ENCODE measurements at regions of chr7 and their contacts with region 1.

Region 1: GRCh38 chr7:69598081-69598486 is at the start of gene AUTS2:
- DNase-seq: peak; percentile 94
- H3K4me3 ChIP-seq: peak within 1 kb of the TSS; percentile 68 to 90 (median 90)
- H3K27ac ChIP-seq: peak within 1 kb of the TSS; percentile 90 to 92 (median 91)
- H3K4me1 ChIP-seq: peaks cover 0 to 44% (median 26%) of the 10 kb centered on the region in 4 donors
- H3K27me3 ChIP-seq: no peaks in the 10 kb centered on the region
- CTCF ChIP-seq: no peak
- EP300 ChIP-seq: no peak
- POLR2A ChIP-seq: no peak
- total RNA-seq, gene AUTS2: 25.5 to 55.7 (median 38.4) TPM

Region 2: DNA sequence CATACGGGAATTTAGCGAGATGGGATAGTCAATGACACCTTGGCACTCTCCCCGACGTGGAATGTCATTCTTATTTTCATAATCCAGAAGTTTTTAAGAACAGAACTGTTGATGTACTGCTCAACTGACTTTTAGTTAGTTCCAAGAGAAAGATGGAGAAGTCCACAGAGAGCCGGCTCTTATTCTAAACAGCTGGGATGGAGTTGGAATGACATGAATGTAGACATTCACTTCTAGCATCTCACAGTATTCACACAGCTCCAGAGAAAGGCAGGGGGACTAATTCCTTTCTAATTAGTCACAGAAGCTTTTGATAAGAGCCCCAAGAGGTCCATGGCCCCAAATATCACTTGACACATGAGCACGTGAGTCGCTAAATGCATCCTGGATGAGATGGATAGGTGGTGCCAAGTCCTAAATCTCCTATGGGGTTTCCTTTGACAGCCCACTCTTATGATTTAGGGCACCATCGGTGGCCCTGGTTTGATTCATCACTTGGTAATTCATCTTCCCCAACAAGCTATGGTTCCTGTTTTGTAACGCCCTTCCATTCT is 420.1 kb before region 1 on chr7:
- intact Hi-C with region 1: loop called (anchors 2 kb)
- DNase-seq: peak; percentile 76
- H3K4me3 ChIP-seq: no peak overlapping the region
- H3K27ac ChIP-seq: peak overlapping the region; percentile 37 to 77 (median 72)
- H3K4me1 ChIP-seq: peaks cover 0 to 30% (median 19%) of the 10 kb centered on the region in 4 donors
- H3K27me3 ChIP-seq: no peaks in the 10 kb centered on the region
- CTCF ChIP-seq: no peak
- EP300 ChIP-seq: peak in 1 of 4 donors; percentile 31
- POLR2A ChIP-seq: no peak

Region 3: DNA sequence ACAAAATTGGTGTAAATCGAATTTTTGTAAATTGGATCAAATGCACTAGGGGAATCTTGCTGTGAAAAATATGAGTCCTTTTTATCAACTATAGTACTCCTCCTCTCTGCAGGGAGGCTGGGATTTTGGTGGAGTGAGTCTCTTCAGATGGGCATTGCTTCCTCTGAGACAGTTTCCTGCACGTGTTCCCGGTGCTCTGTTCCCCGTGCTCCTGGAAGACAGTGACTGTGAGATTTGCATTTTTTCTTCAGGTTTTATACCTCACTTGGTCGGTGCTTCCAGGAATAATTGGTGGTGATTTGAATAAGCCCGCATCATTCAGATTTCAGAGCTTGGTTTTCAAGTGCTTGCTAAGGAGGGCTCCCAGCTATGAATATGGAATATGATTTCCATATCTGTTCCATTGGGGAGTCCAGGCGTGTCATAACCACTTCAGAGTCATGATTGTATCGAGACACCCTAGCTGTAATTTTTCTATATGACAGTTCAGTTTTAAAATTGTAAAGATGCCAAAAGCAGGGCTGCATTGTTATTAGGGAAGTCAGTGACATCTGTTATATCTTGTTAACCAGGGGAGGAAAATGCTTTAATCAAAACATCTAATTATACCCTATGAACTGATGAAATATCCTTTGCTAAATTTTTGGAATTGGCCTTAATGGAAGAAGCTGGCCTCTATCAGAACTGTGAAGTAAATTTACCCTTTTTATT is 12.4 kb after region 1 on chr7:
- intact Hi-C with region 1: no loop called
- DNase-seq: no peak
- H3K4me3 ChIP-seq: no peak overlapping the region
- H3K27ac ChIP-seq: no peak overlapping the region
- H3K4me1 ChIP-seq: peaks cover 0 to 26% (median 8%) of the 10 kb centered on the region in 4 donors
- H3K27me3 ChIP-seq: no peaks in the 10 kb centered on the region
- CTCF ChIP-seq: no peak
- EP300 ChIP-seq: no peak
- POLR2A ChIP-seq: no peak

Region 4: DNA sequence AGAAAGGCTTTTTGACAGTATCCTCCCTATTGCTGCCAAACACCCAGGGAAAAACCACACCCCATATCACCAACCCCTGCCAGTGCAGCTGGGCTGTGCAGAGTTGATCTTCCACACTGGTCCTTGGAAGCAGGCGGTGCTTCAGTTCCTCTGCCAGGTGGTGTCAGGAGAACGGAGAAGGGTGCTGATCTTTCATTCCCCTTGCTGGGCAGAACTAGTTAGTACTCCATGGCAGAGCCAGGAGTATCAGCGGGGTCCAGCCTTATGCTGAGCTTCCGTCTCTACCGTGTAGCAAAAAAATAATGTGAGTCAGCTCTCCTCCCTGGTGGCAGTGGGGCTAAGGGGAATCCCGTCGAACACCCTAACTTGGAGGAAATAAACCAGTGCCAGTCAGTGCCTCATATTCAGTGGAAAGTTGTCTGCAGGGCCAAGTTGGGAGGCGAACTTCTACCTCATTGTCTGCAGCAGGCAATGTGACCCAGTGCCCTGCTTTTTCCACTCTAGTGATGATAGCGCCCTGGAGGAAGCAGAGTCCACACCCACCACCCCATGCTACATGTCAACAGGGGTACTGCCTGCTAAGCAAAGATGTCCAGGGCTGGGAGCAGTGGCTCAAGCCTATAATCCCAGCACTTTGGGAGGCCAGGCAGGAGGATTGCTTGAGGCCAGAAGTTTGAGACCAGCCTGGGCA is 175.6 kb after region 1 on chr7:
- intact Hi-C with region 1: loop called (anchors 5 kb)
- DNase-seq: peak; percentile 71
- H3K4me3 ChIP-seq: no peak overlapping the region
- H3K27ac ChIP-seq: peak overlapping the region; percentile 38 to 74 (median 70)
- H3K4me1 ChIP-seq: peaks cover 0 to 55% (median 35%) of the 10 kb centered on the region in 4 donors
- H3K27me3 ChIP-seq: no peaks in the 10 kb centered on the region
- CTCF ChIP-seq: no peak
- EP300 ChIP-seq: no peak
- POLR2A ChIP-seq: no peak

Region 5: GRCh38 chr7:69825113-69825616 is 227.1 kb after region 1 on chr7:
- intact Hi-C with region 1: loop called (anchors 5 kb)
- DNase-seq: no peak
- H3K4me3 ChIP-seq: no peak overlapping the region
- H3K27ac ChIP-seq: peak overlapping the region in 2 of 4 donors; percentile 27 to 35
- H3K4me1 ChIP-seq: peaks cover 0 to 57% (median 49%) of the 10 kb centered on the region in 4 donors
- H3K27me3 ChIP-seq: no peaks in the 10 kb centered on the region
- CTCF ChIP-seq: no peak
- EP300 ChIP-seq: no peak
- POLR2A ChIP-seq: no peak

Region 6: GRCh38 chr7:69922026-69922803 is 324.1 kb after region 1 on chr7:
- intact Hi-C with region 1: loop called (anchors 10 kb)
- DNase-seq: no peak
- H3K4me3 ChIP-seq: no peak overlapping the region
- H3K27ac ChIP-seq: no peak overlapping the region
- H3K4me1 ChIP-seq: peaks cover 0 to 17% (median 7%) of the 10 kb centered on the region in 4 donors
- H3K27me3 ChIP-seq: no peaks in the 10 kb centered on the region
- CTCF ChIP-seq: no peak
- EP300 ChIP-seq: no peak
- POLR2A ChIP-seq: no peak

Measured in sigmoid colon (tissue), 7 donors.